ENCODE measurements at regions of chr11 and their contacts with region 1.

Region 1: DNA sequence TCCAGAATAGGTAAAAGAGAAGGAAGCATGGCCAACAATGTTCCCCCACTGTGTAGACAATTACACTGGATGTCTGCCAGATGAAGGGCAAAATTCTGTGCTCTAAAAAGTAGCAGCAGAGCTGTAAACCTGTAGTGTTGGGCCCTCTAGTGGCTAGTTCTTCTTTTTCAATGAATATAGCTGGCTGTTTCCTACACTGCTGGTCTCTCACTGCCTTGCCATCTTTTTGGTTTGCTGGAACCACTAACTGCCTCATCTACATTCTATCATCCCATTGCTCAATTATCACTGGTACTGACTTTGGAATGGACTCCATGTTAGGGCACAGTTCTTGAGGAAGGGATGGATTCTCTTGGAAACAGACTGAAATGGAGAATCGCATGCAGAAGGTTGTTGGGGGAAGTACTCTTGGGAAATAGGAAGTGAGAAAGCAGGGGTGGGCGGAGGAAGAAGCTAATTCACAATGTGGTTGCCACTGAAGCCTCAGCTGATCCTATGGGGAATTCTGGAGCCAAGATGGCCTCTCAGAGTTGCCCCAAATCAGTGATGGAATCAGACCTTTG is 17.9 kb downstream of the KCNE3 start:
- DNase-seq: peak; percentile 23
- H3K4me3 ChIP-seq: no peak overlapping the region
- CTCF ChIP-seq: peak; percentile 68

Region 2: GRCh38 chr11:73965076-73965860 is 484.2 kb before region 1 on chr11:
- CTCF ChIA-PET with region 1: interaction called, 14 read pairs
- POLR2A ChIA-PET with region 1: no interaction called
- DNase-seq: no peak
- H3K4me3 ChIP-seq: peak overlapping the region; percentile 13
- CTCF ChIP-seq: no peak

Region 3: DNA sequence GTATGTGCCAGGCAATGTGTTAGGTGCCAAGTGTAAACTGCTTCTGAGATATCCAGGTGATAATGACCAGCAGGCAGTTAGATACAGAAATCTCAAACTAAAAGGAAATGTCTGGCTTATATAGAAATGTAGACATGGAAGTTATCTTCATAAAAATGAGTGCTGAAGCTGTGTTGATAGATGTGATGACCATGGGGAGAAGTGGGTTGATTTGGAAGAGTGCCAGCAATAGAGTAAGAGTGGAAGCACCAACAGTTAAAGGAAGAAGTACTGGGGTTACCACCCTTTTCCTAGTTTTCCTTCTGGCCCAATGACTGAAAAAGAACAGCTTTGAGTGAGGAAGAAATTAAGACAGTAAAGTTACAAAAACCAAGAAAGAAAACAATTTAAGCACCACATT is 347.1 kb before region 1 on chr11:
- CTCF ChIA-PET with region 1: no interaction called
- POLR2A ChIA-PET with region 1: no interaction called
- DNase-seq: no peak
- H3K4me3 ChIP-seq: no peak overlapping the region
- CTCF ChIP-seq: no peak

Region 4: GRCh38 chr11:74321487-74322188 is 127.8 kb before region 1 on chr11:
- CTCF ChIA-PET with region 1: interaction called, 11 read pairs
- POLR2A ChIA-PET with region 1: no interaction called
- DNase-seq: no peak
- H3K4me3 ChIP-seq: no peak overlapping the region
- CTCF ChIP-seq: peak; percentile 43

Region 5: DNA sequence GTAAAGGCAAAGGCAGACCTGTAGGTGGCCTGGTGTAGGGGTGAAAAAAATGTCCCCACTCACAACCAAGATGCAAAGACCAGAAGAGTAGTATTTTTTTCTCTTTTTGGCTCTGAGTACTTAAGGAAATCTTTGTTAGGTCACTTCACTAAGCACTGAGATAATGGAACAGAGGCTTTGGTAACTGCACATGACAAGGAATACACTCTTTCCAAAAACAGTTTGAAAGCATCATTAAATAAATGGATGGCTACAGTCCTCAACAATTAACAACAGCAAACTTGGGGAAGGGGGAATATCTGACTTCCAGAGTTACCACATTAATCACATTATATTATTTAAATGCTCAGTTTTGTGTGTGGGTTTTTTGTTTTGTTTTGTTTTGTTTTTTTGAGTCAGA is 24.4 kb before region 1 on chr11:
- CTCF ChIA-PET with region 1: interaction called, 18 read pairs
- POLR2A ChIA-PET with region 1: no interaction called
- DNase-seq: no peak
- H3K4me3 ChIP-seq: no peak overlapping the region
- CTCF ChIP-seq: no peak

Region 6: GRCh38 chr11:74473382-74474173 is 24.1 kb after region 1 on chr11:
- CTCF ChIA-PET with region 1: interaction called, 20 read pairs
- POLR2A ChIA-PET with region 1: no interaction called
- DNase-seq: no peak
- H3K4me3 ChIP-seq: no peak overlapping the region
- CTCF ChIP-seq: no peak

Region 7: DNA sequence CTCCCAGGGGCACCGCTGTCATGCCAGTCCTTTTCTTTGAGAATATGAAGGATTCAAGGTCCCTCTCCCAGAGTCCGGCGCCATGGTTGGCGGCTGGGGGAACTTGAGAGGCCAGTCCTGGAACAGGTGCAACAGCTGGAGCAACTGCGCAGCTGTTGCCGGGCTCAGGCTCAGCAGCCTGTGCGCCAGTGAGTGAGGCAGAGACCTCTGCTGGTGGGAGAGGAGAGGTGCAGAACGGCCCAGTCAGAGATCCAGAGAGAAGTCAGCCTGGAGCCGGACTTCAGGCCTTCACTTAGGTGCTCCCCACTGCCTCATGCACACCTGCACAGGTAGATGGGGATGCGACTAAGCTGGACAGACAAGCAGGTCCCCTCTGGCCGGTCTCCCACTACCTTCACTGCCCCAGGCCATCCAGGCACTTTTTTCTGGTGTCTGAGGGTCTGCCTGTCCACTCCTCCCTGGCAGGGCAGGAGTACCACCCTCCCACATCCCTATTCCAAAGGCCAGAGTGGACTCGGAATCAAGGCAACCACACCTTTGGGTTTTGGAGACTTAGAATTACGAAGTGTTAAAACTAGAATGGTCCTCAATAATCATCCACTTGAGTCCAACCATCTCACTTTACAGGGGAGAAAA is 277.2 kb after region 1 on chr11:
- CTCF ChIA-PET with region 1: interaction called, 75 read pairs
- POLR2A ChIA-PET with region 1: no interaction called
- DNase-seq: no peak
- H3K4me3 ChIP-seq: no peak overlapping the region
- CTCF ChIP-seq: peak; percentile 98